CD4-positive, alpha-beta T cell (primary cell): ENCODE measurements at regions of chr12 and their contacts with region 1.

Region 1: GRCh38 chr12:12376646-12377448 is 20.0 kb downstream of the BORCS5 start:
- DNase-seq: peak in 6 of 14 experiments; percentile 15 to 88 (median 59)
- ATAC-seq: peak; percentile 47
- H3K4me3 ChIP-seq: no peak overlapping the region
- H3K4me3 Mint-ChIP-seq: no peak overlapping the region
- H3K27ac ChIP-seq: no peak overlapping the region
- H3K27ac Mint-ChIP-seq: peak overlapping the region; percentile 62
- H3K4me1 ChIP-seq: peaks cover 20% of the 10 kb centered on the region
- H3K4me1 Mint-ChIP-seq: peaks cover 49% of the 10 kb centered on the region
- H3K27me3 ChIP-seq: no peaks in the 10 kb centered on the region
- H3K27me3 Mint-ChIP-seq: no peaks in the 10 kb centered on the region
- CTCF ChIP-seq: peak; percentile 83

Region 2: DNA sequence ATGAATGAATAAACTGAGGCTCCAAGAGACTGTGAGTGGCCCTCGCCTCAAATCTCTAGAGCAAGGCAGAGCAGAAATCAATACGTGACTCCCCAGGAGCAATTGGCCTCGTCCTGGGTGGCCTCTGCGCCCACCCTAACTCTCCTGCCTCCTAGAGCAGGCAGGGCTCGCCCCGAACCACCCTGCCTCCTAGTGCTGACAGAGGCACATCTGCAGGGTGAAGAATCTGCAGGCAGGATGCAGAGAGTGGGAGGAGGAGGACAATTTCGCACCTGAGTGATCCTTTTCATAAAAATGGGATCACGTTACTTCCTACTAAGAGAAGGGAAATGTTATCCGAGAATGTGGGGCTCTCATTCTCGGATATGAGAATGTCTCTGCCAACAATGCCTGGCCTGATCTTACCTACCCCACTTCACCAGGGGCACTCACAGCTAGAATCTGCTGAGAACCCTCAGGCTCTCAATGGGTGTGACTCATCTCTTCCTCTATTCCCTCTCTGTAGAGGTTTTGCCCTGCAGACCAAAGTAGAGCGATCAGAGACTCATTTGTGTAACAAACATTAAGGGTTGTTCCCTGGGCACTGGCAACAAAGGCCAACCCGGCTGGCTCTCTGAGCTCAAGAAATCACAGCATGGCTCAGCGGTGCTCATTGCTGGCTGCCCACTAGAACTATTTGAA is 367.8 kb before region 1 on chr12:
- CTCF ChIA-PET with region 1: no interaction called
- POLR2A ChIA-PET with region 1: no interaction called
- intact Hi-C with region 1: no loop called
- DNase-seq: peak in 13 of 14 experiments; percentile 39 to 81 (median 45)
- ATAC-seq: peak; percentile 65
- H3K4me3 ChIP-seq: no peak overlapping the region
- H3K4me3 Mint-ChIP-seq: peak overlapping the region; percentile 78
- H3K27ac ChIP-seq: peak overlapping the region; percentile 74 to 76
- H3K27ac Mint-ChIP-seq: peak overlapping the region; percentile 96
- H3K4me1 ChIP-seq: peaks cover 63% of the 10 kb centered on the region
- H3K4me1 Mint-ChIP-seq: peaks cover 80% of the 10 kb centered on the region
- H3K27me3 ChIP-seq: no peaks in the 10 kb centered on the region
- H3K27me3 Mint-ChIP-seq: no peaks in the 10 kb centered on the region
- CTCF ChIP-seq: peak; percentile 24

Region 3: DNA sequence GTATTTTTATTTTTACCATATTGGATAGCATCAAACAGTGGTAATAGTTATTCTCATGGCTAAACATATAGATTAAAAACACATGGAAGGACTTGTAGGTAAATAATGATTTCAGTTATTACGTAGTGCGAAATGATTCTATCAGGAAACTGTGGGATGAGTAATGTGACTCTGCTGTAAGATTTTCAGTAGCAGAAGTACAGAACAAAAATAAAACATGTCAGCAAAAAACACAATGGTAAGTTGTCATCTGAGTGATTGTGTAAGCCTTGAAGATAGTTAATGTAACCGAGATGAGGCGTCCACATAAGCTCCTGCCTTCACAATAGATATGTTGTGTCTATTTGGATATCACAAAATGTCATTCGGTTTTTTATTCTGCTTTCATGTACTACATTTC is 79.8 kb after region 1 on chr12:
- CTCF ChIA-PET with region 1: interaction called, 4 read pairs
- POLR2A ChIA-PET with region 1: interaction called, 4 read pairs
- intact Hi-C with region 1: loop called in 1 of 2 experiments (anchors 1 kb)
- DNase-seq: peak in 3 of 14 experiments; percentile 61 to 67 (median 63)
- ATAC-seq: peak; percentile 74
- H3K4me3 ChIP-seq: peak overlapping the region; percentile 29
- H3K4me3 Mint-ChIP-seq: peak overlapping the region; percentile 68
- H3K27ac ChIP-seq: peak overlapping the region in 1 of 2 donors; percentile 68
- H3K27ac Mint-ChIP-seq: peak overlapping the region; percentile 85
- H3K4me1 ChIP-seq: peaks cover 18% of the 10 kb centered on the region
- H3K4me1 Mint-ChIP-seq: peaks cover 42% of the 10 kb centered on the region
- H3K27me3 ChIP-seq: no peaks in the 10 kb centered on the region
- H3K27me3 Mint-ChIP-seq: no peaks in the 10 kb centered on the region
- CTCF ChIP-seq: no peak

Region 4: GRCh38 chr12:12486661-12487240 is 109.9 kb after region 1 on chr12:
- CTCF ChIA-PET with region 1: interaction called, 11 read pairs
- POLR2A ChIA-PET with region 1: interaction called, 24 read pairs
- intact Hi-C with region 1: loop called in 1 of 2 experiments (anchors 1 kb)
- DNase-seq: no peak
- ATAC-seq: no peak
- H3K4me3 ChIP-seq: no peak overlapping the region
- H3K4me3 Mint-ChIP-seq: no peak overlapping the region
- H3K27ac ChIP-seq: peak overlapping the region in 1 of 2 donors; percentile 56
- H3K27ac Mint-ChIP-seq: peak overlapping the region; percentile 73
- H3K4me1 ChIP-seq: peaks cover 37% of the 10 kb centered on the region
- H3K4me1 Mint-ChIP-seq: peaks cover 51% of the 10 kb centered on the region
- H3K27me3 ChIP-seq: no peaks in the 10 kb centered on the region
- H3K27me3 Mint-ChIP-seq: no peaks in the 10 kb centered on the region
- CTCF ChIP-seq: no peak

Region 5: DNA sequence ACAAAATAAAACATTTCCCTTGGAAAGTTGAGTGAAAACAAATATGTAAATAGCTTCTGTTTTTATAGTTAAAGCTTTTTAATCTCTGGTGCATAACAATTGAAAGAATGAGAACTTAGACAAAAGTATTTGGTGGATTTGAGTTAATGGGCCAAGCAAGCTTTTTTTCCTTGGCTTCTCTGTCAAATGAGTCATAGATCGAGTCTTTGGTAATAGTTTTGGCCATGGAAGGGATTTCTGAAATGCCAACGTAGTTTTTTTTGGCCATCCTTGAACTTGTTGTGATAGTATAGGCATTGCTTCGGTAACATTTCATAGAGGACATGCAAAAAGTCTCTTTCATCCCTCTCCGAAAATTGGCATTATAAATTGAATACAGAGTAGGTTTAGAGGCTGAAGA is 284.2 kb after region 1 on chr12:
- CTCF ChIA-PET with region 1: interaction called, 14 read pairs
- POLR2A ChIA-PET with region 1: interaction called, 10 read pairs
- intact Hi-C with region 1: loop called (anchors 1 kb)
- DNase-seq: no peak
- ATAC-seq: no peak
- H3K4me3 ChIP-seq: no peak overlapping the region
- H3K4me3 Mint-ChIP-seq: no peak overlapping the region
- H3K27ac ChIP-seq: no peak overlapping the region
- H3K27ac Mint-ChIP-seq: no peak overlapping the region
- H3K4me1 ChIP-seq: peaks cover 2% of the 10 kb centered on the region
- H3K4me1 Mint-ChIP-seq: peaks cover under 1% of the 10 kb centered on the region
- H3K27me3 ChIP-seq: no peaks in the 10 kb centered on the region
- H3K27me3 Mint-ChIP-seq: no peaks in the 10 kb centered on the region
- CTCF ChIP-seq: no peak

Region 6: GRCh38 chr12:12716793-12717585 is 340.1 kb after region 1 on chr12 and contains the start of gene CDKN1B:
- CTCF ChIA-PET with region 1: interaction called, 5 read pairs
- POLR2A ChIA-PET with region 1: interaction called, 8 read pairs
- intact Hi-C with region 1: loop called in 1 of 2 experiments (anchors 2 kb)
- DNase-seq: peak; percentile 75 to 95 (median 84)
- ATAC-seq: peak; percentile 56
- H3K4me3 ChIP-seq: peak within 1 kb of the TSS; percentile 97
- H3K4me3 Mint-ChIP-seq: peak within 1 kb of the TSS; percentile 99
- H3K27ac ChIP-seq: peak within 1 kb of the TSS; percentile 88 to 97
- H3K27ac Mint-ChIP-seq: peak within 1 kb of the TSS; percentile 95
- H3K4me1 ChIP-seq: peaks cover 38% of the 10 kb centered on the region
- H3K4me1 Mint-ChIP-seq: peaks cover 69% of the 10 kb centered on the region
- H3K27me3 ChIP-seq: no peaks in the 10 kb centered on the region
- H3K27me3 Mint-ChIP-seq: no peaks in the 10 kb centered on the region
- CTCF ChIP-seq: no peak
- total RNA-seq, gene CDKN1B: 352 TPM

Region 7: DNA sequence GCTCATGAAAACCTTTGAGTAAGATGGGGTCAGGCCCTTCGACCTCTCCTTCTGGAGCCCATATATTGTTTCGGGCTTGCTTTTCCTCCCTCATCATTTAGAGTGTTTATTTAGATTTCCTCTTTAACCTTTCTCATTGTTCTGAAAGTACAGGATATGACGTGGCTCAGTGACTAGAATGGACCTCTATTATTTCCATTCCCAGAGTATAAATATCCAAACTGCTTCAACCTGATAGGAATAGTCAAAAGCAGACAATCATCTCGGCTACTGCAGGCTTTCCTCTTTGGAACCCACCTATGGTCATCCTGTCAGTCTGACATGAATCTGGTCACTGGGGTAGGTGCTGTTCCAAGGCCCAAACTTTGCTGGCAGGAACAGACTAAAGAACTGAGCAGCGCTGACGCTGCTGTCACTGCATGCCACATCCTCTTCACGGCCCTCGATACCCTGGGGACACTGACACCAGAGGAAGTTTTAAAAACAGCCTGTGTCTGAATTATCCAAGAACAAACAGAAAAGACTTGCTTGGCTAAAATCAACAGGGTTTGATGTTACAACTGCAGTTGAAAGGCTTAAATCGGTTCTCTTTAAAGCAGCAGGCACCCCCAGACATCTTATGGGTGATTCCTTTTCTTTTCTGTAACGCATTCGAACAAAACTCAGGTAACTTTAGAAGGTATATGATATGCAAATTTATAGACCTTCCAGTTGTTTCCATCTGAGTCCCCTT is 431.3 kb after region 1 on chr12:
- CTCF ChIA-PET with region 1: no interaction called
- POLR2A ChIA-PET with region 1: no interaction called
- intact Hi-C with region 1: loop called in 1 of 2 experiments (anchors 5 kb)
- DNase-seq: peak; percentile 45 to 89 (median 61)
- ATAC-seq: peak; percentile 78
- H3K4me3 ChIP-seq: no peak overlapping the region
- H3K4me3 Mint-ChIP-seq: peak overlapping the region; percentile 72
- H3K27ac ChIP-seq: peak overlapping the region; percentile 70 to 94
- H3K27ac Mint-ChIP-seq: peak overlapping the region; percentile 97
- H3K4me1 ChIP-seq: peaks cover 49% of the 10 kb centered on the region
- H3K4me1 Mint-ChIP-seq: peaks cover 54% of the 10 kb centered on the region
- H3K27me3 ChIP-seq: no peaks in the 10 kb centered on the region
- H3K27me3 Mint-ChIP-seq: no peaks in the 10 kb centered on the region
- CTCF ChIP-seq: no peak